ENCODE measurements at regions of chr7 and their contacts with region 1.

Region 1: DNA sequence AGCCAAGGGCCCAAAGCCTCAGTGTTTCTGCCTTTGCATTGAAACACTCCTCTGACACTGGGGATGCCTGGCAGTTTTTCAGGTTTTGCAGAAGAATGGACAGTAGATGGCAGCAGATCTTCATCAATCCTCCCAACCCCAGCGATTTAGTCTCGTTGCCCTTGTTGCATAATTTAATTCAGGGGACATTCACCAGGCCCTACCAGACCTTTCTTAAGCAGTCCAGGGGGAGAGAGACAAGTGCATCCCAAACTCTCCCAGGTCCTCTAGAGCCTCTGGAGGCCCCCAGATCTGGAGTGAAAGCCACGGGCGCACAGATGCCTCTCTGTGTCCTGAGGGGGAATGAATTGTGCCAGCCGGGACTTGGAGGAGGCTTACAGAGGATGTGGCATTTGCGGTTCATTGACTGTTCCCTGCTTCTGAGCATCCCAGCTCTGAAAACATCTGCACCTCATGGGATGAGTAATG is 29.6 kb downstream of the MINDY4 start:
- DNase-seq: peak; percentile 46
- ATAC-seq: peak; percentile 88
- H3K4me3 ChIP-seq: no peak overlapping the region
- H3K27ac ChIP-seq: no peak overlapping the region
- H3K4me1 ChIP-seq: no peaks in the 10 kb centered on the region; the same call in 1 of the 2 replicates
- H3K27me3 ChIP-seq: no peaks in the 10 kb centered on the region
- CTCF ChIP-seq: peak; percentile 83

Region 2: DNA sequence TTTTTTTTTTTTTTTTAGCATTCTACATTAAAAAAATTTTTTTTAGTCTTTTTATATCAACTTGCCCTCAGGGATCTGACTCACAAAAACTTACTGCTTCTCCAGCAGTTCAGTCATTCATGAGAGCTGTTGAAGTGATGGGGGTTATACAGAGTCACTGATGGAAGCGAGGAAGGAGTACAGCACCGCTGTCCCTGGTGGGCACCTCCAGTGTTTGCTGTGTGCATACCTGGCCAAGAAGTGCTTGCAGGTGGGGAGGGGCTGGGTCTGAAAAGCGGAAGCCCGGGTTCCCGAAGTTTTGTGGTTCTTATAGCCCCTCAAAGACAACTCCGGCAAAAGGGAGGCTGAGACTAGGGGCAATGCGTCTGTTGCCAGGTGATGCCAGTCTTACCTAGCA is 16.6 kb after region 1 on chr7:
- CTCF ChIA-PET with region 1: no interaction called
- POLR2A ChIA-PET with region 1: interaction called, 17 read pairs
- in situ Hi-C with region 1: no loop called
- intact Hi-C with region 1: no loop called
- DNase-seq: no peak
- ATAC-seq: no peak
- H3K4me3 ChIP-seq: no peak overlapping the region
- H3K27ac ChIP-seq: no peak overlapping the region
- H3K4me1 ChIP-seq: no peaks in the 10 kb centered on the region
- H3K27me3 ChIP-seq: no peaks in the 10 kb centered on the region
- CTCF ChIP-seq: no peak

Region 3: GRCh38 chr7:30908681-30909080 is 107.9 kb after region 1 on chr7:
- CTCF ChIA-PET with region 1: no interaction called
- POLR2A ChIA-PET with region 1: no interaction called
- in situ Hi-C with region 1: no loop called
- intact Hi-C with region 1: loop called (anchors 10 kb)
- DNase-seq: no peak
- ATAC-seq: no peak
- H3K4me3 ChIP-seq: no peak overlapping the region
- H3K27ac ChIP-seq: no peak overlapping the region
- H3K4me1 ChIP-seq: no peaks in the 10 kb centered on the region
- H3K27me3 ChIP-seq: no peaks in the 10 kb centered on the region
- CTCF ChIP-seq: no peak

Region 4: GRCh38 chr7:30974605-30975255 is 173.9 kb after region 1 on chr7:
- CTCF ChIA-PET with region 1: interaction called, 3 read pairs
- POLR2A ChIA-PET with region 1: no interaction called
- in situ Hi-C with region 1: no loop called
- intact Hi-C with region 1: loop called (anchors 2 kb)
- DNase-seq: no peak
- ATAC-seq: peak; percentile 79
- H3K4me3 ChIP-seq: no peak overlapping the region
- H3K27ac ChIP-seq: no peak overlapping the region
- H3K4me1 ChIP-seq: peaks cover 8% of the 10 kb centered on the region; the same call in 1 of the 2 replicates
- H3K27me3 ChIP-seq: peaks cover 12% of the 10 kb centered on the region
- CTCF ChIP-seq: peak; percentile 84

Region 5: GRCh38 chr7:31122649-31123058 is 321.8 kb after region 1 on chr7:
- CTCF ChIA-PET with region 1: no interaction called
- POLR2A ChIA-PET with region 1: no interaction called
- in situ Hi-C with region 1: no loop called
- intact Hi-C with region 1: loop called (anchors 5 kb)
- DNase-seq: peak; percentile 64
- ATAC-seq: peak; percentile 89
- H3K4me3 ChIP-seq: no peak overlapping the region
- H3K27ac ChIP-seq: no peak overlapping the region
- H3K4me1 ChIP-seq: no peaks in the 10 kb centered on the region
- H3K27me3 ChIP-seq: peaks cover 25% of the 10 kb centered on the region
- CTCF ChIP-seq: peak; percentile 95